Aorta (tissue), 5 donors: ENCODE measurements at regions of chr17 and their contacts with region 1.

Region 1: DNA sequence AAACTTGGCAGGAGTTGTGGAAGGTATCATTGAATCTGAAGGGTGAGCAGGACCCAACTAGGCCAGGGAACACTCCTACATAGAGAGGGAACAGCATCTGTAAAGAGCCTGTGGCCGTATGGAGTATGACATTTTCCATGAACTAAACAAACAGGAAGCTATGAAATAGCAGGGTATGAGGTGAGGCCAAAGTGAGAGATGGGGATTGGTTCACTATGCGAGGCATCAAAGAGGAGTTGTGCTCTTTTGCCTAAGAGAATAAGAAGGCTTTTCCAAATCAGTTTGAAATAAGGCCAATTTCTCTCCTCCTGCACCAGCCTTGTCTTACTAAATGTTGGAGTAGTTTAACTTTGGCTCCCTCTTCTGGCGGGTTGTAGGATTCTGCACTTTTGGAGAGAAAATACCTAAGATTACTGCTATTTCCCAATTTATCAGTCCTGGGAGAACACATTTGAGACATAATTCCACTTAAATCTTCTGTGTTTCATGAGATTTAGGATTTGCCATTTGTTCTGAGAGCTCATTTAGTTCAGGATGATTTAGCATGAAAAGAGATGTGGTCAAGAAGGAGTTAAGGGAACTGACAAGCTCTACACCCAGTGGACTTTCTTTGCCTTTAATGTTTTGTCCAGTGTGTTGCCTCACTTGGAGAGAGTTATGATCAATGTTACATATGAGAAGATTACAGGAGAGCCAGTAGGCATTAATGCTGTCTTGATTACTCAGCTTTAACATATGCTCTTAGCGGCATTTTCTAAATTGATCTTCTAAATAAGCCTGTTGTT is 55.4 kb downstream of the TNRC6C start:
- DNase-seq: no peak
- ATAC-seq: peak; percentile 78
- H3K4me3 ChIP-seq: no peak overlapping the region
- H3K27ac ChIP-seq: peak overlapping the region in 1 of 2 donors; percentile 38
- H3K4me1 ChIP-seq: no peaks in the 10 kb centered on the region
- H3K27me3 ChIP-seq: no peaks in the 10 kb centered on the region

Region 2: GRCh38 chr17:77542551-77543490 is 471.1 kb before region 1 on chr17:
- intact Hi-C with region 1: loop called (anchors 1 to 2 kb)
- DNase-seq: peak; percentile 89
- ATAC-seq: peak; percentile 94
- H3K4me3 ChIP-seq: no peak overlapping the region
- H3K27ac ChIP-seq: no peak overlapping the region
- H3K4me1 ChIP-seq: no peaks in the 10 kb centered on the region
- H3K27me3 ChIP-seq: no peaks in the 10 kb centered on the region

Region 3: GRCh38 chr17:77957857-77958715 is 55.8 kb before region 1 on chr17 and contains the start of gene TNRC6C:
- intact Hi-C with region 1: loop called in 1 of 2 experiments (anchors 5 kb)
- DNase-seq: peak; percentile 100
- ATAC-seq: peak; percentile 99
- H3K4me3 ChIP-seq: peak within 1 kb of the TSS; percentile 98 to 99
- H3K27ac ChIP-seq: peak within 1 kb of the TSS; percentile 91 to 95
- H3K4me1 ChIP-seq: peaks cover 2 to 9% of the 10 kb centered on the region in 2 donors
- H3K27me3 ChIP-seq: no peaks in the 10 kb centered on the region
- total RNA-seq, gene TNRC6C: 45.7 to 62.2 TPM

Region 4: GRCh38 chr17:78072961-78073360 is 59.1 kb after region 1 on chr17:
- intact Hi-C with region 1: no loop called
- DNase-seq: no peak
- ATAC-seq: no peak
- H3K4me3 ChIP-seq: no peak overlapping the region
- H3K27ac ChIP-seq: no peak overlapping the region
- H3K4me1 ChIP-seq: no peaks in the 10 kb centered on the region
- H3K27me3 ChIP-seq: no peaks in the 10 kb centered on the region

Region 5: DNA sequence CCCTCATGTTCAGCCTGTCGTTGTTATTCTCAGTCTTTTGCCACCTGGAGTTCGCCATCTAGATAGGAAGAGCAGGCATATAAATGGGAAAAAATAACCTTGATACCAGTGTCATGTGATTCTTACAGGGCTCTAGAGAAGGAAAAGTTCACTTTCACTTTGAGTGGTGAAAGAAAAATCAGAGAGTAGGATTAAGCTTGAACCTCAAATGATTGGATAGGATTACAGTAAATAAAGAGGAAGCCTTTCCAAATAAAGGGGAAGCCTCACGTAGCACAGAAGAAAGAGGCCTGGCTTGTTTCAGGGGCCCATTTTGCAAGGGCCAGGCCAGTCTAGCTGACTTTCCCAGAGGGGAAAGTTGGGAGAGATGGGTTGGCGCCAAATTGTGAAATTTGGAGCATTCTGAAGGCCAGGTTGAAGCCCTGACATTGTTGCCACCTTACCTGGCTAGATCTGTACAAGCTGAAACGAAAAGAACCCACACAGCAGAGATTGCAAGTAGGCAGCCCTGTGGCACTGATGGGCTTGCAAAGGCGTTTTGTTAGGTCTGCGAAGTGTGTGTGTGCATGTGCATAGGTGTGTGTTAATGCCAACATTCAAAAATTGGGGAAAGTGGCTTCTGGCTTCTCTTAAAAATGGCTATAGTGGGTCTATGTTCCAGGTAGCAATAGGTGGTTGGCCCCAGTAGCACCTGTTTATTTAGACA is 75.9 kb after region 1 on chr17:
- intact Hi-C with region 1: loop called (anchors 5 to 10 kb)
- DNase-seq: no peak
- ATAC-seq: no peak
- H3K4me3 ChIP-seq: no peak overlapping the region
- H3K27ac ChIP-seq: no peak overlapping the region
- H3K4me1 ChIP-seq: no peaks in the 10 kb centered on the region
- H3K27me3 ChIP-seq: no peaks in the 10 kb centered on the region